ENCODE measurements at regions of chr17 and their contacts with region 1.

Region 1: DNA sequence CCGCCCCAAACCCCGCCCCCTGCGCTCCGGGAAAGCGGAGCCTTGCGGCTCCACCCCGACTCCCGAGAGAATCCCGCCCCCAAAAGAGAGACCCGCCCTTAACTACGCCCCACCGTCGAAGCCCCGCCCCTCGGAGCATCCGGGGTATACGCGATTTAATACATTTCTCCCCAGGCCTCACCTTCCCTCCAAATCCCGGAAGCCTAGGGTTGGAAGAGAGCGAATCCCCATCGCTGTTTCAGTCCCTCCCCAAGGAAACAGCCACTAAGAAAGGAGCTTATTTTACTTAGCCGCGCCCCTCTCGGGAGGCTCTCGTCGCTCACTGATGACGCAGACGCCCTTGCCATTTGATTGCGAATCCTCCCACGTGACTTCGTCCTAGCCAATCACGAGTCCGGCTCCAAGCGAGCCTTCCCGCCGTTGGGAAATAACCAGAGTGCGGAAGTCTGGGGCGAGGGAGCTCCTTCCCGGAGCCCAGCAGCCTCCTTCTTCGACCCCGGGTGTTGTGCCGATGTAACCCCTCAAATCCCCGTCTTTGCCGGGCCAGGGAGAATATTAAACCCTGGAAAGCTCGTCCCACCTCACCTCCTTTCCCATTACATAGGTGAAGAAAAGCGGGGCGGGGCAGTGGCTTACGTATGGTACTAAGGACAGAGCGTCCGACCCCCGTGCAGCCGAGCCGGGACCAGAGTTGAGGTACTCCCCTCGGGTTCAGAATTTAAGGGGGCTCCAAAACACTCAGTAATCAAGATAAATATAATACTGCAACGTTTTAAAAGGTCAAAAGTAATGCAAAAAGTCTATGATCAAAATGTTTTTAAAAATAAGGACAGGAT is 462 bp upstream of the FDXR start:
- DNase-seq: peak; percentile 100
- H3K4me3 Mint-ChIP-seq: peak overlapping the region; percentile 96
- H3K27ac Mint-ChIP-seq: peak overlapping the region; percentile 86
- H3K4me1 Mint-ChIP-seq: peaks cover 40% of the 10 kb centered on the region
- H3K27me3 Mint-ChIP-seq: no peaks in the 10 kb centered on the region

Region 2: DNA sequence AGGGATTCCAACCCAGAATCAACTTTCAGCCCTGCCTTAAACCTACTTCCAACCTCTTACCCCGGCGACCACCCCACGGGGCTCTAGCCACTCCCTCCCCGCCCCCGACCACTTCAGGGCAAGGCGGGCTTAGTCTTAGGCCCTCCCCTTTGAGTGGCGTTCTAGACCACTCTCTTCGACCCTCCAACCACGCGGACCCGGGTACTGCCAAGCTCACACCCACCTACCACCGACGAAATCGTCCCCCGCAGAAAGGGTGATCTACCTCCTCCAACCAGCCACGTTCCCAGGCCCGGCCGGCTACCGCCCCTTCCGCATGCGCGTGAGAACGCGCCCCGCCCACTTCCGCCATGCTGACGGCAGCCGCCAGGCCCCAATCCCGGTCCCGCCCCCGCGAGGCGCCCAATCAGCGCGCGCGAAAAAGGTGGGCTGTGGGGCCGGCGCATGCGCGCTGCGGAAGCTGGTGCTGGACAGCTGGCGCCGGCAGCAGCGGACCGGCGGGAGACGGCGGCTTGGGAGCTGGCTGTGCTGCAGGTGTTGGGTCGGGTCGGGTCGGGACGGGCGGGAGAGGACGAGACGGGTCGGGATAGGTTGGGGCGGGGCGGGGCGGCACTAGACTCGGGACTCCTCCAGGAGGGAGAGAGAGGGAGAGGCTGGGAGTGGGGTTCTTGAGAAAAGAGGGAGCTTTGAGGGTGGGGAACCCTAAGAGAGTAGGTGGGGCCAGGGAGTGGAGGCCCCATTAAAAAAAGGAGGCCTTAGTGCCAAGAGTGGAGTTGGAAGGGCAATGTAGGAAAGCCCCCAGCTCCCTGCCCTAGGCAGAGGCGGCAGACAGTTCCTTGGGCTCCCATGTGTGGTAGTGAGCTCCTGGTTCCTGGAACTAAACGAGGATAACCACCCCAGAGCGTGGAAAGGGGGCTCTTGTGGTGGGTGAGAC is 96.9 kb before region 1 on chr17 and contains the start of gene NAT9:
- CTCF ChIA-PET with region 1: interaction called, 4 read pairs
- POLR2A ChIA-PET with region 1: interaction called, 17 read pairs
- DNase-seq: peak; percentile 99
- H3K4me3 Mint-ChIP-seq: peak within 1 kb of the TSS; percentile 99
- H3K27ac Mint-ChIP-seq: peak within 1 kb of the TSS; percentile 85
- H3K4me1 Mint-ChIP-seq: peaks cover 68% of the 10 kb centered on the region
- H3K27me3 Mint-ChIP-seq: no peaks in the 10 kb centered on the region
- total RNA-seq, gene NAT9: 32.1 to 32.3 TPM

Region 3: DNA sequence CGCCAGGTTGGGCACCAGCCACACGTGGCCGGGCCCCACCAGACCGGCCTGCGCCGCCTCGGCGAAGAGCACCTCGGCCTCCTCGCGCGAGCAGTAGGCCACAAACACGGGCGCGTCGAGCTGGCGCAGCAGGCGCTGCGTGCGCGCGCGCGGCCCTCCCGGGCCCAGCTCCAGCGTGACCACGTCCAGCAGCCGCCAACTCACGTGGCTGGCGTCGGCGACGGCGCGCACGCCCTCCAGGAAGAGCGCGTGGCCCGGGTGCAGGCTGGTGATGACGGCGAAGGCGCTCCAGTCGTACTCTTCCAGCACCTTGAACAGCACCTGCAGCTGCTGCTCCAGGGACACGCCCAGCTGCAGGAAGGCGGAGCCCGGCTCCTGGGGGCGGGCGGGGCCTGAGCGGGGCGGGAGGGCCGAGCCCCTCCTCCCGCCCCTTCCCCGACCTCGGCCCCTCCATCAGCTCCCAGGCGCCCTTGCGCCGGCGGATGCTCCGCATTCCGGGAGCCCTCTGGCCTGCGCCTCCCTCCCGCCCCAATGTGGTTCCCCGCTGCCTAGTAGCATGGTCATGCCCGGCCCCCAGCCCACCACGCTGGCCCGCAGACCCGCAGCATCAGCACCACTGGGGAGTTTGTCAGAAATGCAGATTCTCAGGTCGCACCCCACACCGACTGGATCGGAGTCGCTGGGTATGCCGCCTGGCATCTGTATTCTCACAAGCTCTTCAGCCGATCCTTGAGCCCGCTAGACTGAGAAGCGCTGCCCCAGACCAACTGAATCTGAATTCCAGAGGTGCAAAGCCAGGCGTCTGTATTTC is 20.8 kb before region 1 on chr17:
- CTCF ChIA-PET with region 1: no interaction called
- POLR2A ChIA-PET with region 1: interaction called, 11 read pairs
- DNase-seq: peak; percentile 62
- H3K4me3 Mint-ChIP-seq: peak overlapping the region; percentile 59
- H3K27ac Mint-ChIP-seq: no peak overlapping the region
- H3K4me1 Mint-ChIP-seq: peaks cover 9% of the 10 kb centered on the region
- H3K27me3 Mint-ChIP-seq: peaks cover 51% of the 10 kb centered on the region

Region 4: DNA sequence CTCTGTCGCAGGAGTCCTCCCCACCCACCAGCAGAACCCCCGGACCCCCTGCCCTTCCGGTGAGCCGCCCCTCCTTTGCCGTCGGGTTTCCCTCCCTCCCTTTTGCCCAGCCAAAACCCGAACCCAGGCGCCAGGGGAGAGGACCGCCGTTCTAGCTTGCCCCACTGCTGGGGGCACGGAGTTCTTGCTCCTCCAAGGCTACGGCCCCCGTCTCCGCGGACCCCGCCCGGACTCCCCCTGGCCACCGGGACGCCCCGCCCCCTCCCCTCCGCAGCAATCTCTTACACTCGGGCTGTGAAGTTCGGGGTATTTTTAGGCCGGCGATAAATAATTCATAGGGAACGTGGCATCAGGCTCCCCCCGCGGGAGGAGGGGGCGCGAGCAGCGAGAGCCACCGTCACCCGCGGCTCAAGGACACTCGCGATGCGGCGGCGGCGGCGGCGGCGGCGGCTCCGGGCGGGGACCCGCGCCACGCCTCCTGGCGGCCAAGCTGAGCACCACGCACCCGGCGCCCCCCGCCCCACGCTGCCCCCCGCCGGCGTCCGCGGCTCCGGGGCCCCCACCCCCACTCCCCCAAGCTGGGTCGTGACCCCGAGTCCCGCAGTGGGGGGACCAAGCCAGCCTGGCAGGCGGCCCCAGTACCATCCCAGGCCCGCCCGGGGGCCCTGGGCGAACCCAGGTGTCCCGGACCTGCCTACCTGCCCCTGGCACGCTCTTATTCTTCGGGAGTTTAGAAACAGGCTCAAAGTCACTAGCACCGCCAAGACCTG is 13.6 kb before region 1 on chr17 and contains the start of gene GRIN2C:
- CTCF ChIA-PET with region 1: interaction called, 33 read pairs
- POLR2A ChIA-PET with region 1: interaction called, 17 read pairs
- DNase-seq: peak; percentile 33
- H3K4me3 Mint-ChIP-seq: no peak within 1 kb of the TSS
- H3K27ac Mint-ChIP-seq: no peak within 1 kb of the TSS
- H3K4me1 Mint-ChIP-seq: peaks cover 14% of the 10 kb centered on the region
- H3K27me3 Mint-ChIP-seq: peaks cover 60% of the 10 kb centered on the region
- total RNA-seq, gene GRIN2C: 0.45 TPM in 1 of 2 experiments, not detected in the other

Region 5: DNA sequence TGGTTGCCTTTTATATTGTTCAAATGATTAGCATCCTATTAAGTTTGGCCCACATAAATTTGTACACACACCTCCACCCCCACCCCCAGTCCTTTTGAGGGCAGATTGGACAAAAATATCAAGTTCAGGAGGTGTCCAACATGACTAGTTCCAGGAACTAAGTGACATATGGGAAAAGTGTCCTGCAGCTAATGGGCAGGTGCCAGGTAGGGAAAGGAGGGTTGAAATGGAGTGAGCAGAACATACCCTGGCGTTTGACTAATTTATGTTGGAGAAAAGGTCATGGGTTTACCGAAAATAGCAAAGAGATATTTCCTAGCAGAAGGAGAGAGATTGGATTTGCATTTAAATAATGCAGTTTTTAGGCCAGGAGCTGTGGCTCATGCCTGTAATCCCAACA is 178.7 kb after region 1 on chr17:
- CTCF ChIA-PET with region 1: no interaction called
- POLR2A ChIA-PET with region 1: no interaction called
- DNase-seq: no peak
- H3K4me3 Mint-ChIP-seq: no peak overlapping the region
- H3K27ac Mint-ChIP-seq: no peak overlapping the region
- H3K4me1 Mint-ChIP-seq: peaks cover 24% of the 10 kb centered on the region
- H3K27me3 Mint-ChIP-seq: no peaks in the 10 kb centered on the region